ENCODE measurements at regions of chr17 and their contacts with region 1.

Region 1: DNA sequence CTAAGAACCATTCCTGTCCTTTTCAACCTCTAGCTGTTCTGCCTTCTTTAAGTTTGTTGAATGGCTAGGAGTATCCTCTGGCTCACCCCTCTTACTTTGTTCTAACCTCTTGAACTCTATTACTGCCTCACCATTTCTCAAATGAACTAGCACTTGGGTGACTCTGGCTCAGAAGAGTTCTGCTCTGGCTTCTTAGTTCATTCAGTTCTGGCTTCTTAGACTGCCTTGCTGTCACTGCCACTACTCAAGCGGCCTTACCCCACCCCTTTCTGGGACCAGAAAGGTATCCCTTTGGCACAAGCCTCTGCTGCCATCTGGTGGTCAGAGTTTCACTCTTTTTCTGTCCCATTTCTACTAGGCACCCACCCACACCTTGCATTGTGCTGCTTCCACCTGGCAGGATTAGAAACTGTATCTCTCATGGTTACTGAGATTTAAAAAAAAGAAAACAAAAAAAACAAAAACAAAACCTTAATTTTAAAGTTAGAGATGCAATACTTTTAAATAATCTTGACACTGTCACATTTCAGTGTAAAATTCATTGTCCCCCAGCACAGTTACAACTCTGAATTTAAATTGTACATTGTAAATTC is 6.8 kb upstream of the ABCA10 start:
- H3K4me3 Mint-ChIP-seq: no peak overlapping the region
- H3K27ac Mint-ChIP-seq: peak overlapping the region; percentile 88
- H3K4me1 Mint-ChIP-seq: peaks cover 21% of the 10 kb centered on the region
- H3K27me3 Mint-ChIP-seq: no peaks in the 10 kb centered on the region

Region 2: GRCh38 chr17:68771867-68772515 is 463.4 kb before region 1 on chr17:
- intact Hi-C with region 1: loop called (anchors 1 kb)
- H3K4me3 Mint-ChIP-seq: peak overlapping the region; percentile 60
- H3K27ac Mint-ChIP-seq: peak overlapping the region; percentile 83
- H3K4me1 Mint-ChIP-seq: peaks cover 26% of the 10 kb centered on the region
- H3K27me3 Mint-ChIP-seq: peaks cover 1% of the 10 kb centered on the region

Region 3: GRCh38 chr17:68794636-68795434 is 440.6 kb before region 1 on chr17:
- intact Hi-C with region 1: loop called (anchors 5 kb)
- H3K4me3 Mint-ChIP-seq: peak overlapping the region; percentile 25
- H3K27ac Mint-ChIP-seq: peak overlapping the region; percentile 88
- H3K4me1 Mint-ChIP-seq: peaks cover 67% of the 10 kb centered on the region
- H3K27me3 Mint-ChIP-seq: no peaks in the 10 kb centered on the region

Region 4: DNA sequence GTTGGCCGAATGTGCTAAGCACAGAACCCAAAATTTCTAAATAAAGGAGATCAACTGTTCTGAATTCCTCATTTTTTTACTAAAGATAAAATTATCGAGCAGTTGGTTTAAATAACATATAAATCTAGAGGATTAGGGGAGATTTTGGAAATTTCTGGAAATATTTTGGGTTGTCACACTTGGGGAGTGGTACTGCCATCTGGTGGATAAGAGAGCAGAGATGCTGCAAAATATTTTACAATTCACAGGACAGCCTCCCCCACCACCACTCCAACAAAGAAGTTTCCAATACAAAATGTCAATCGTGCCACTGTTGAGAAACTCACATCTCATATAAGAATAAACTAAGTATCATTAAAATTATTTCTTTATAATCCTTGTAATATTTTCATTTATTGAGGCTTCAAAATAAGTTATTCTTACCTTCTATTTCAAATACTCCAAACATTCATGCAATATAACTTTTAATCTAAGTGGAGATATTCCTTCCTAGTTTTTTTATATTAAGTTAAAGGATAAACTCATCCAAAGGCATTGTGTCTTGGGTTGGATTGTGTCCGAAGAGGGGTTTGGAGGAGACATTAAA is 263.2 kb before region 1 on chr17:
- intact Hi-C with region 1: loop called (anchors 2 kb)
- H3K4me3 Mint-ChIP-seq: no peak overlapping the region
- H3K27ac Mint-ChIP-seq: no peak overlapping the region
- H3K4me1 Mint-ChIP-seq: peaks cover 34% of the 10 kb centered on the region
- H3K27me3 Mint-ChIP-seq: peaks cover 4% of the 10 kb centered on the region

Region 5: GRCh38 chr17:69060822-69061221 is 174.6 kb before region 1 on chr17 and contains the start of gene ABCA9:
- intact Hi-C with region 1: loop called (anchors 10 kb)
- H3K4me3 Mint-ChIP-seq: no peak within 1 kb of the TSS
- H3K27ac Mint-ChIP-seq: no peak within 1 kb of the TSS
- H3K4me1 Mint-ChIP-seq: peaks cover 30% of the 10 kb centered on the region
- H3K27me3 Mint-ChIP-seq: no peaks in the 10 kb centered on the region

Region 6: GRCh38 chr17:69093279-69093789 is 142.1 kb before region 1 on chr17:
- intact Hi-C with region 1: loop called (anchors 10 kb)
- H3K4me3 Mint-ChIP-seq: peak overlapping the region; percentile 32
- H3K27ac Mint-ChIP-seq: peak overlapping the region; percentile 90
- H3K4me1 Mint-ChIP-seq: peaks cover 53% of the 10 kb centered on the region
- H3K27me3 Mint-ChIP-seq: no peaks in the 10 kb centered on the region

Region 7: DNA sequence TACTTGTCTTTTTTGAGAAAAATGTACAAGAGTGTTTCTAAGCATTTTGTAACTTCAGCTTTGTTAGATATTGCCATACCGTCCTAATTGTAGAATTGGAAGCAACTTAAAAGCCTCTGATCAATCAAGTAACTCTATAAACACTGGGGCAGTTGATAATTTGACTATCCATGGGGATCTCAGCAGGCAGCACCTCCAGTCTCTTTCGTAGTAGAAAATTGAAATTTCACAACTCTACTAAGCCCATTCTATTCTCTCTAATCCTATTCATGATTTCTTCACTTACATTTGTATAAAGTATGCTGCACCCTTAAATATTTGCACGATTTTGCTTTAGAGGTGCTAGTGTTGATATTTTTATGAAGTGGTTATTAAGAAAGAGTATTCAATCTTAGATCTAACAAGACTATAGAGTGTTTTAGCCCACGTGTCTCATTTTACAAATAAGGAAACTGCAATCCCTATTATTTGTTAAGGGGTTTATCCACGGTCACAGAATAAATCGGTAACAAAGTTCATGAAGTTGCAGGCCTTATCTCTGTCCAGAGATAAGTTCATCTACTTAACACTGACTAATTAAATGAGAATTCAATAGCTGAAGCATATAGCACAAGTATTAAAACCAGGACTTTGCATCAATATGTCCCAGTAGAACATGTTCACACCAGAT is 104.7 kb before region 1 on chr17:
- intact Hi-C with region 1: loop called (anchors 10 kb)
- H3K4me3 Mint-ChIP-seq: no peak overlapping the region
- H3K27ac Mint-ChIP-seq: peak overlapping the region; percentile 93
- H3K4me1 Mint-ChIP-seq: peaks cover 21% of the 10 kb centered on the region
- H3K27me3 Mint-ChIP-seq: no peaks in the 10 kb centered on the region

Measured in dendritic cell treated with granulocyte-macrophage colony-stimulating factor and Interleukin-4, amounts not matched to agents 40 ng/mL and 50 ng/mL, for 4 days (primary cell).